ENCODE measurements at regions of chr10 and their contacts with region 1.

Region 1: GRCh38 chr10:35126530-35127296 is at the start of gene CREM:
- DNase-seq: peak; percentile 100
- H3K4me3 Mint-ChIP-seq: peak within 1 kb of the TSS; percentile 80
- H3K27ac Mint-ChIP-seq: peak within 1 kb of the TSS; percentile 99
- H3K4me1 Mint-ChIP-seq: peaks cover 56% of the 10 kb centered on the region
- H3K27me3 Mint-ChIP-seq: no peaks in the 10 kb centered on the region
- total RNA-seq, gene CREM: 48.7 to 51.6 TPM

Region 2: DNA sequence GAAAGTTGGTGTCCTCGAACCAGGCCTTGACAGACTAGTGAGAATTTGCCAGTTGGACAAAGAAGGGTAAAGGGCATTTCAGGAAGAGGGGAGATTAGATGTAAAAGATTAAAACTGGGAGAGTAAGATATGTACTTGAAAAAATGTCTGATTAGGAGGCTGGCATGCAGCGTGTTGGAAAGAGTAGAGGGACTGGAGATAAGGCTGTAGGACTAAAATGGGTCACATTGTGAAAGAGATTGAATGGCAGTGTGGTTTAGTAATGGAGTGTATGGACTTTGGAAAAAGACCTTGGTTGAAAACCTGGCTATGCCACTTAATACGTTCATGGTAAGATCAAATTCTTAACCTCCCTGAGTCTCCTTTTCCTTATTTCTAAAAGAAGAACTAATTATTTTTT is 14.0 kb after region 1 on chr10:
- CTCF ChIA-PET with region 1: interaction called, 11 read pairs
- POLR2A ChIA-PET with region 1: no interaction called
- DNase-seq: no peak
- H3K4me3 Mint-ChIP-seq: no peak overlapping the region
- H3K27ac Mint-ChIP-seq: no peak overlapping the region
- H3K4me1 Mint-ChIP-seq: peaks cover 27% of the 10 kb centered on the region
- H3K27me3 Mint-ChIP-seq: no peaks in the 10 kb centered on the region

Region 3: DNA sequence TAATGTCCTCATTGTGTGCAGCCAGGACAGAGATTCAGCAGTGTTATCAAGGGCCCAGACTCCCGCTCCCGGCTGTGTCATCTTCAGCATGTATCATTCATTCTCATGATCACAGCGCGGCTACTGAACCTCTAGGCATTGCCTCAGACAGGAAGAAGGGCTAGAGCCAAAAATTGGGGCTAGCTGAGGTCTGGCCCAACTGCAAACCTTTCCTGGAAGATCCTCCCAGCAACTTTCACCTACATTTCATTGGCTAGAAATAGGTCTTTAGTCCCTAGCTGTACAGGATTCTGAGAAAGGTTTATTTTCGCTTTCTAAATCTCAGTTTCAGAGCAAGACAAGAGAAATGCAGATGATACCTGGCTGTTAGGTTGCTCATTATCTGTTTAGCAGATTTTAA is 81.8 kb after region 1 on chr10:
- CTCF ChIA-PET with region 1: interaction called, 59 read pairs
- POLR2A ChIA-PET with region 1: no interaction called
- DNase-seq: peak; percentile 68
- H3K4me3 Mint-ChIP-seq: peak overlapping the region; percentile 45
- H3K27ac Mint-ChIP-seq: peak overlapping the region; percentile 91
- H3K4me1 Mint-ChIP-seq: peaks cover 66% of the 10 kb centered on the region
- H3K27me3 Mint-ChIP-seq: no peaks in the 10 kb centered on the region

Region 4: GRCh38 chr10:35218339-35218955 is 91.7 kb after region 1 on chr10:
- CTCF ChIA-PET with region 1: interaction called, 29 read pairs
- POLR2A ChIA-PET with region 1: interaction called, 4 read pairs
- DNase-seq: peak; percentile 93
- H3K4me3 Mint-ChIP-seq: no peak overlapping the region
- H3K27ac Mint-ChIP-seq: peak overlapping the region; percentile 78
- H3K4me1 Mint-ChIP-seq: peaks cover 42% of the 10 kb centered on the region
- H3K27me3 Mint-ChIP-seq: no peaks in the 10 kb centered on the region

Measured in activated CD4-positive, alpha-beta T cell treated with anti-CD3 and anti-CD28 coated beads, Interleukin-2, amount 10 ng/mL, durations not matched to agents 7 days and 5 days (primary cell).